ENCODE measurements at regions of chr4 and their contacts with region 1.

Region 1: GRCh38 chr4:63904201-63904600 is 505.0 kb downstream of the TECRL start:
- DNase-seq: no peak
- ATAC-seq: no peak
- H3K4me3 ChIP-seq: no peak overlapping the region
- H3K27ac ChIP-seq: no peak overlapping the region
- H3K4me1 ChIP-seq: no peaks in the 10 kb centered on the region
- H3K27me3 ChIP-seq: no peaks in the 10 kb centered on the region
- CTCF ChIP-seq: no peak

Region 2: DNA sequence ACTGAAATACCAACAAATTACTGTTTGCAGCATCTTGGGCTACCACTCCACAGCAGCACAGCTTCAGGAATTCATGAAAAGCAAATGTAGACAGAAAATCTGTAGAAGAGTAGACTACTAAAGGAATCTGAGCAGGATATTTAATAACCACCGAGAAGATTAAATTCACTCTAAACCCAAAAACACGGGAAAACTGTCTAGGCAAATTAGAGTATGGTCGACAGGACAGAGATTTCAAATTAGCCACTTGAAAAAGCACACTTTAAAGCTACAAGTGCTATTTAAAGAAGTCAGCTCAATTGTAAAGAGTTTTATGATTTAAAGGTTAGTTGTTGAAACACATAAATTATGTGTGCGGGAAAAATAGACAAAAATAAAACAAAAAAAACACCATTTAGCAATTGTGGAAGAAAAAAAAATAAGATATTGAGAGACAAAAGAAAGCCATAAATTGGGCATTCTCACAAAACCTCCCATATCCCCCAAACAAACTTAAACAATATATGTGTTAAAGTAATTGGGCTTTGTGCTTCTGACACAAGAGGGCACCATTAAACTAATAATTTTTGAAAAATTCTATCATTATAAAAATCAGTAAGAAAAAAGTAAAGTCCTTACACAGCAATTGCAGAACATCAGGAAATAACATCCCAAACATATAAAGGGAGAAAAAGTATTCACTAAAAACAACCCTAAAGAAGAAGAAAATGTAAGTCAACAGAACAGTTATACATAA is 375.8 kb before region 1 on chr4:
- intact Hi-C with region 1: no loop called
- DNase-seq: no peak
- ATAC-seq: no peak
- H3K4me3 ChIP-seq: peak overlapping the region in 3 of 10 donors; percentile 5 to 26 (median 22)
- H3K27ac ChIP-seq: peak overlapping the region in 1 of 10 donors; percentile 1
- H3K4me1 ChIP-seq: no peaks in the 10 kb centered on the region
- H3K27me3 ChIP-seq: no peaks in the 10 kb centered on the region
- CTCF ChIP-seq: peak in 3 of 9 donors; percentile 5 to 26 (median 26)

Region 3: DNA sequence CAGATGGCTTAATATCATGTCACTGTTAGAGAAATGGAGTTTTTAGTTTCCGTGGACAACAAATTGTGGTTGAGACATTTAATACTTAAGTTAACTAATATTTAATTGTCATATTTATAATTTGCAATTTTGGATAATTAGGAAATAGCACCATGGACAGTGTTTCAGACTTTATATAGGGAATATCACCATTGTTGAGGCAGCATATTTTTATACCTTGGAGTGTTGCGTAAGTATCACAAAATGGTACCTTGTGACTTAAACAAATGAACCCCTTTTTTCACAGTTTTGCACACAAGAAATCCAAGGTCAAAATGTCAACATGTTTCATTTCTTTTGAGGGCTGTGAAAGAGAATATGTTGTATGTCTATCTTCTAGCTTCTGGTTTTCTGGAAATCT is 34.8 kb before region 1 on chr4:
- intact Hi-C with region 1: loop called in 1 of 10 experiments (anchors 2 kb)
- DNase-seq: no peak
- ATAC-seq: no peak
- H3K4me3 ChIP-seq: no peak overlapping the region
- H3K27ac ChIP-seq: no peak overlapping the region
- H3K4me1 ChIP-seq: no peaks in the 10 kb centered on the region
- H3K27me3 ChIP-seq: no peaks in the 10 kb centered on the region
- CTCF ChIP-seq: no peak

Measured in heart right ventricle (tissue), 16 donors.